ENCODE measurements at regions of chr7 and their contacts with region 1.

Region 1: GRCh38 chr7:76291343-76292212 is 10.9 kb upstream of the HSPB1 start:
- DNase-seq: peak; percentile 99
- ATAC-seq: peak; percentile 82
- H3K4me3 ChIP-seq: no peak overlapping the region
- H3K27ac ChIP-seq: peak overlapping the region; percentile 92
- H3K4me1 ChIP-seq: peaks cover 22% of the 10 kb centered on the region
- H3K27me3 ChIP-seq: no peaks in the 10 kb centered on the region
- CTCF ChIP-seq: peak; percentile 99
- POLR2A ChIP-seq: peak; percentile 62; the same call in 1 of the 2 replicates
- RAD21 ChIP-seq: peak; percentile 94

Region 2: GRCh38 chr7:76179686-76180085 is 111.9 kb before region 1 on chr7:
- CTCF ChIA-PET with region 1: interaction called, 9 read pairs
- POLR2A ChIA-PET with region 1: no interaction called
- dilution Hi-C with region 1: no loop called
- in situ Hi-C with region 1: no loop called
- intact Hi-C with region 1: loop called (anchors 1 kb)
- DNase-seq: no peak
- ATAC-seq: no peak
- H3K4me3 ChIP-seq: no peak overlapping the region
- H3K27ac ChIP-seq: no peak overlapping the region
- H3K4me1 ChIP-seq: no peaks in the 10 kb centered on the region
- H3K27me3 ChIP-seq: no peaks in the 10 kb centered on the region
- CTCF ChIP-seq: no peak
- POLR2A ChIP-seq: no peak
- RAD21 ChIP-seq: no peak

Region 3: GRCh38 chr7:76262683-76263402 is 28.7 kb before region 1 on chr7:
- CTCF ChIA-PET with region 1: interaction called, 4 read pairs
- POLR2A ChIA-PET with region 1: interaction called, 19 read pairs
- dilution Hi-C with region 1: no loop called
- in situ Hi-C with region 1: no loop called
- intact Hi-C with region 1: no loop called
- DNase-seq: peak; percentile 60
- ATAC-seq: peak; percentile 92
- H3K4me3 ChIP-seq: no peak overlapping the region
- H3K27ac ChIP-seq: no peak overlapping the region
- H3K4me1 ChIP-seq: no peaks in the 10 kb centered on the region
- H3K27me3 ChIP-seq: peaks cover 33% of the 10 kb centered on the region
- CTCF ChIP-seq: peak; percentile 81
- POLR2A ChIP-seq: no peak
- RAD21 ChIP-seq: peak; percentile 78

Region 4: GRCh38 chr7:76302347-76303201 is 11.0 kb after region 1 on chr7 and contains the start of gene HSPB1:
- CTCF ChIA-PET with region 1: interaction called, 5 read pairs
- POLR2A ChIA-PET with region 1: interaction called, 5 read pairs
- dilution Hi-C with region 1: no loop called
- in situ Hi-C with region 1: no loop called
- intact Hi-C with region 1: loop called (anchors 1 kb)
- DNase-seq: peak; percentile 84
- ATAC-seq: peak; percentile 79
- H3K4me3 ChIP-seq: peak within 1 kb of the TSS; percentile 91
- H3K27ac ChIP-seq: peak within 1 kb of the TSS; percentile 93
- H3K4me1 ChIP-seq: peaks cover 21% of the 10 kb centered on the region
- H3K27me3 ChIP-seq: no peaks in the 10 kb centered on the region
- CTCF ChIP-seq: peak; percentile 1; the same call in 1 of the 2 replicates
- POLR2A ChIP-seq: peak; percentile 98
- RAD21 ChIP-seq: no peak; the same call in none of the 2 replicates
- total RNA-seq, gene HSPB1: 33.2 and 48.6 TPM in 2 replicates

Region 5: DNA sequence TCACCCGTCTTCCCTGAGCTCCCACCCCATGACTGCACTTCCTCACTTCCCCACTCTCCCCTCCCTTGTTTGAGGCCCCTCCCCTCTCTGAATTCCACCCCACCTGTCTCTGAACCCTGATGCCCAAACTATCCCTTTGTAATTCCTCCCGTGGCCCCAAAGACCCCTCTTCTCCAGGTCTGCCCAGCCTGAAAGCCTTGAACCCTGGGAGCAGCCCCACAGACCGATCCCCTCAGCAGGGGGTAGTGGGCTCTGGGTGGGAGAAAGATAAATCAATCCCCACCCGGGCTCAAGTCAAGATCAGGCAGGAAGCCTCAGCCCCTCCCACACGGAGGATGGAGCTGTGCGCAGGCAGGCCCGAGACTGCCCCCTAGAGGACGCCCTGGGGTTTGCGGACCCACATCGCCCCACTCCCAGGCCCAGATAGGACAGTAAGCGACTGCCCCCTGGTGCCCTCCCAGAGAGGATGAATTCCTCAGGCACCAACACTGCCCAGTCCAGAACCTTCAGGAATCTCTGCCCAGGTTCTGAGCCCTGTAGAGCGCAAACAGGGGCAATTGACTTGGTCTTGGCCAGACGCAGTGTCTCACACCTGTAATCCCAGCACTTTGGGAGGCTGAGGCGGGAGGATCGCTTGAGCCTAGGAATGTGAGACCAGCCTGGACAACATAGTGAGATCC is 22.6 kb after region 1 on chr7:
- CTCF ChIA-PET with region 1: interaction called, 8 read pairs
- POLR2A ChIA-PET with region 1: no interaction called
- dilution Hi-C with region 1: no loop called
- in situ Hi-C with region 1: no loop called
- intact Hi-C with region 1: loop called (anchors 1 kb)
- DNase-seq: peak; percentile 89
- ATAC-seq: peak; percentile 65
- H3K4me3 ChIP-seq: no peak overlapping the region
- H3K27ac ChIP-seq: no peak overlapping the region
- H3K4me1 ChIP-seq: peaks cover 6% of the 10 kb centered on the region
- H3K27me3 ChIP-seq: no peaks in the 10 kb centered on the region
- CTCF ChIP-seq: peak; percentile 100
- POLR2A ChIP-seq: peak; percentile 76
- RAD21 ChIP-seq: peak; percentile 100

Measured in IMR-90 (cell line).